IMR-90 (cell line): ENCODE measurements at regions of chr1 and their contacts with region 1.

Region 1: DNA sequence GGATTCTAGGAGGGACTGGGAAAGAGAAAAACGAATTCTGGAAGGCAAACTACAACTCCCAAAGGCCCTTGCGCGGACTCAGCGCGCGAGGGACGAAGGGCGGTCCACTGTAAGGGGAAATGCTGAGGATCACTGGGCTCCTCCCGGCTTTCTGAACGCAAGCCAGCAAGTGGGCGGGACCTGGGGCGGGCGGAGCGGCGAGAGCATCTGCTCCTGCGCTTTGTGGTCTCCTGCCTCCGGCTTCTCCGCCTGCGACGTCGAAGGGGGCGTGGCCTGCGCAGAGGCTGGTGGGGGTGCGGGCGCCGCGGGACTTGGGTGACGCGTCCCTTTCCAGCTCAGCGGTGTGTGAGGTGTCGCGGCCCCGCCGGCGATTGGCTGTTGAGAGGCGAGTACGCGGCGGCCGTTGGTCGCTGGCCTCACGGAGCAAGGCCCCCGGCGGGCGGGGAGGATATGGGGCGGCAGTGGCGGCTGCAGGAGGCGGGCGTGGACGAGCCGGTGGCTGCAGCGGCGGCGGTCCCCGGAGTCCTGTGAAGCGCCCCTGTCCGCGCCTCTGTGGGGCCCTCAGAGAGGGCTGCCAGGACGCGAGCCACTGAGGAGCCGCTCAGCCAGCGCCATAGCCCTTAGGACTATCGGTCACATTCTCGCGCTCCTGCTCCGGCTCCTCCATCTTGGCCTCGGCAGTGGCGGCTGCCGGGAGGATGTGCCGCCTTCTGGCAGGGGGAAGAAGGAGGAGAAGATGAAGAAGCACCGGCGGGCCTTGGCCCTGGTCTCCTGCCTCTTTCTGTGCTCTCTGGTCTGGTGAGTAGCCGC is at the start of gene SUCO:
- DNase-seq: peak; percentile 99
- ATAC-seq: peak; percentile 92
- H3K4me3 ChIP-seq: peak within 1 kb of the TSS; percentile 97
- H3K27ac ChIP-seq: peak within 1 kb of the TSS; percentile 83
- H3K4me1 ChIP-seq: peaks cover 2% of the 10 kb centered on the region; the same call in 1 of the 2 replicates
- H3K27me3 ChIP-seq: no peaks in the 10 kb centered on the region
- CTCF ChIP-seq: no peak
- POLR2A ChIP-seq: peak; percentile 86
- RAD21 ChIP-seq: peak; percentile 1; the same call in 1 of the 2 replicates
- total RNA-seq, gene SUCO: 21.5 and 31.7 TPM in 2 replicates

Region 2: DNA sequence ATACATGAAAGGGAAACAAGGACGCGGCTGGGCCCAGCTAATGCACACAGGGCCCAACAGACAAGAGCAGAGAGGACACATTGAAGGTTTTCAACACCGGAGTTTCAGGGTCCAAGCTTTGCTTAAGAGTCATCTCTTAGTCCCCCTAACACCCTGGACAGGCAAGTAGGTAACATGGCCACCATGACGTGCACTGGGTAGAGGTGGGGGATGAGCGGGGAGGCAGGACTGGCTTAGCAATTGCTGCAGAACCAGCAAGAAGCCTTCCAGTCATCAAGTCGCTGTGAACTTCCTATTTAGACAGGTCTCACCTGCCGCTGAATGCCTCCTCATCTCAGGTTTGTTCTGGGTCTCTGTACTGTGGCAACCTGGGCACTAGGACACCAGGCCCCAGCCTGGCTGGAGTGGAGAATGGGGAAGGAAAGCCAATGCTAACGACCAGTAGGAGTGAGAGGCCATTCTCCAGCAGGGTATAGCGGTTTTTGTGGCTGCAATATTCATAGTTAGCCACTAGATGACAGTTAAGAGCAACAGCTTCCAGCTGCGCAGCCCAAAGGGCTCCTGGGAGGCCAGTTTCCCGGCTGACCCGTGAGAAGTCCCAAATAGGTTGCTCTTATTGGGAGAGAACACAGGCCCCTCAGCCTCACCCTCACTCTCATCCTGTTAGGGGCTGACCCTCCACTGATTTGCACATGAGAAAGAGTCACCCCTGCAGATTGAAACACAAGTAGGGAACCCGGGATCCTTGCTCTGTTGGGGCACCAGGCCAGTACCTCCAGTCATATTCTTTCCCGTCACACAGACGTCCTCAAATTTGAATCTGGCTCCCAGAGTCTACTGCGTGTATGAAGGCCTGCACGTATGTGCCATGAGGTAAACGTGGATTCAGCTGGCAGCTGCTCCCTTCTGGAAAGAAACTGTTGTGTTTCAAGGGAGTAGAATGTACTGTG is 83.0 kb before region 1 on chr1:
- CTCF ChIA-PET with region 1: no interaction called
- POLR2A ChIA-PET with region 1: no interaction called
- dilution Hi-C with region 1: no loop called
- in situ Hi-C with region 1: no loop called
- intact Hi-C with region 1: loop called (anchors 2 kb)
- DNase-seq: peak; percentile 51
- ATAC-seq: peak; percentile 95
- H3K4me3 ChIP-seq: no peak overlapping the region
- H3K27ac ChIP-seq: no peak overlapping the region
- H3K4me1 ChIP-seq: peaks cover 10% of the 10 kb centered on the region
- H3K27me3 ChIP-seq: peaks cover 5% of the 10 kb centered on the region
- CTCF ChIP-seq: peak; percentile 80
- POLR2A ChIP-seq: no peak
- RAD21 ChIP-seq: peak; percentile 76

Region 3: GRCh38 chr1:172547071-172547470 is 14.2 kb after region 1 on chr1:
- CTCF ChIA-PET with region 1: no interaction called
- POLR2A ChIA-PET with region 1: no interaction called
- dilution Hi-C with region 1: no loop called
- in situ Hi-C with region 1: no loop called
- intact Hi-C with region 1: no loop called
- DNase-seq: peak; percentile 68
- ATAC-seq: peak; percentile 62
- H3K4me3 ChIP-seq: no peak overlapping the region
- H3K27ac ChIP-seq: no peak overlapping the region
- H3K4me1 ChIP-seq: peaks cover 3% of the 10 kb centered on the region; the same call in 1 of the 2 replicates
- H3K27me3 ChIP-seq: no peaks in the 10 kb centered on the region
- CTCF ChIP-seq: no peak
- POLR2A ChIP-seq: no peak
- RAD21 ChIP-seq: no peak

Region 4: DNA sequence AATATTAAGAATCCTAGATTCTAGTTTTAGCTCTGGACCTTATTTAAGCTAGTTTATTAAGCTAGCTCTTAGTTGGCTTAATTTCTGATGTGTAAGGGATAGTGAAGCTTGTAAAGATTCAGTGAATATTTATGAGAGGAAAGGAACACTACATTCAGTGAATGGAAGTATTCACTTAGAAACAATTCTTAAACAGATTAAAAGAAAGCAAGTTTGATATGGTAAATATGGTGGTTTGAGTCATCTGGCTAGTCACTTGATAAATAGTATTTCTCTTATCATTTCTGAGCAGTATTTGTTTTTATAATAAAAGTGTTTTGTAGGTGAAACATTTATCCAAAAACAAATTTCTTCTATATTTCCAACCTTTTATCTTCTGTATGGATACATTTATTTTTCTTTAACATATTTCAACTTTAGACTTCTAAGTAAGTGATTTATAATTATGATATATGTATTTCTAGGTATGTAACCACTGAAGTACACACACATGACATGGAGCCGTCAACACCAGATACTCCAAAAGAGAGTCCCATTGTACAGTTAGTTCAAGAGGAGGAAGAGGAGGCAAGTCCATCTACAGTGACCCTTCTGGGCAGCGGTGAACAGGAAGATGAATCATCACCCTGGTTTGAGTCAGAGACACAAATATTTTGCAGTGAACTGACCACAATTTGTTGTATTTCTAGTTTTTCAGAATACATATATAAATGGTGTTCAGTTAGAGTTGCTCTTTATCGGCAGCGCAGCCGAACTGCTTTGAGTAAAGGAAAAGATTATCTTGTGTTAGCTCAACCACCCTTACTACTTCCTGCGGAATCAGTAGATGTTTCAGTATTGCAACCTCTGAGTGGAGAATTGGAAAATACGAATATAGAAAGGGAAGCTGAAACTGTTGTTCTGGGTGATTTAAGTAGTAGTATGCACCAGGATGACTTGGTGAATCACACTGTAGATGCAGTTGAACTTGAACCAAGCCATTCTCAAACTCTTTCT is 55.7 kb after region 1 on chr1:
- CTCF ChIA-PET with region 1: no interaction called
- POLR2A ChIA-PET with region 1: no interaction called
- dilution Hi-C with region 1: no loop called
- in situ Hi-C with region 1: no loop called
- intact Hi-C with region 1: loop called (anchors 2 kb)
- DNase-seq: peak; percentile 94
- ATAC-seq: peak; percentile 96
- H3K4me3 ChIP-seq: peak overlapping the region; percentile 33; the same call in 1 of the 2 replicates
- H3K27ac ChIP-seq: peak overlapping the region; percentile 81
- H3K4me1 ChIP-seq: peaks cover 4% of the 10 kb centered on the region; the same call in 1 of the 2 replicates
- H3K27me3 ChIP-seq: no peaks in the 10 kb centered on the region
- CTCF ChIP-seq: no peak
- POLR2A ChIP-seq: no peak
- RAD21 ChIP-seq: no peak